Gastrocnemius medialis (tissue), 4 donors: ENCODE measurements at regions of chr19 and their contacts with region 1.

Region 1: DNA sequence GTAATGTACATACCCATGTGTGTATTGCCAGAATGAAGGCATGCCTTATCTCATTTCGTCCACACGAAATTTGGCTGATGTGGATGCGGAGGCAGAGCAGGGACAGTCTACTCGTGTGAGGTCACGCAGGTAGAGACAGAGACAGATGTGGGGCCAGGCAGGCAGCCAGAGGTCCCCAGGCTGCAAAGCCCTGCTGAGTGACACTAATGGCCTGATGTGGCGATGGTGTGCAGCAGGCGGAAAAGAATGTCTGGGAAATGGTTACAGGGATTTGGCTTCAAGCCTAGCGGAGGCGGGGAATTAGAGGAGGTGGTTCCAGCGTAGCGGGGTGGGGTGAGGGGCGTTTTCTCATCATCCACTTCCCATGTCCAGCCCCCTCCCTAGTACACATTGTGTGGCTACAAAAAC is 4.2 kb upstream of the IZUMO2 start:
- DNase-seq: no peak
- ATAC-seq: no peak
- H3K4me3 ChIP-seq: no peak overlapping the region
- H3K27ac ChIP-seq: no peak overlapping the region
- H3K4me1 ChIP-seq: no peaks in the 10 kb centered on the region
- H3K27me3 ChIP-seq: peaks cover 6 to 31% (median 12%) of the 10 kb centered on the region in 3 donors
- CTCF ChIP-seq: no peak
- POLR2A ChIP-seq: no peak

Region 2: GRCh38 chr19:50178859-50179537 is 11.7 kb after region 1 on chr19:
- in situ Hi-C with region 1: no loop called
- intact Hi-C with region 1: no loop called
- DNase-seq: no peak
- ATAC-seq: no peak
- H3K4me3 ChIP-seq: no peak overlapping the region
- H3K27ac ChIP-seq: no peak overlapping the region
- H3K4me1 ChIP-seq: no peaks in the 10 kb centered on the region
- H3K27me3 ChIP-seq: no peaks in the 10 kb centered on the region
- CTCF ChIP-seq: no peak
- POLR2A ChIP-seq: no peak

Region 3: GRCh38 chr19:50252111-50252886 is 85.0 kb after region 1 on chr19:
- in situ Hi-C with region 1: loop called in 3 of 4 experiments (anchors 25 kb)
- intact Hi-C with region 1: loop called (anchors 5 kb)
- DNase-seq: no peak
- ATAC-seq: no peak
- H3K4me3 ChIP-seq: no peak overlapping the region
- H3K27ac ChIP-seq: no peak overlapping the region
- H3K4me1 ChIP-seq: no peaks in the 10 kb centered on the region
- H3K27me3 ChIP-seq: no peaks in the 10 kb centered on the region
- CTCF ChIP-seq: peak; percentile 28 to 62 (median 51)
- POLR2A ChIP-seq: no peak

Region 4: GRCh38 chr19:50258918-50259372 is 91.6 kb after region 1 on chr19:
- in situ Hi-C with region 1: loop called in 3 of 4 experiments (anchors 25 kb)
- intact Hi-C with region 1: loop called (anchors 5 kb)
- DNase-seq: no peak
- ATAC-seq: no peak
- H3K4me3 ChIP-seq: no peak overlapping the region
- H3K27ac ChIP-seq: no peak overlapping the region
- H3K4me1 ChIP-seq: no peaks in the 10 kb centered on the region
- H3K27me3 ChIP-seq: no peaks in the 10 kb centered on the region
- CTCF ChIP-seq: peak; percentile 55 to 84 (median 78)
- POLR2A ChIP-seq: no peak